Head of caudate nucleus (tissue), 42 donors: ENCODE measurements at regions of chr1 and their contacts with region 1.

Region 1: GRCh38 chr1:151606395-151606794 is 5.5 kb upstream of the SNX27 start:
- DNase-seq: peak in 27 of 42 donors; percentile 7 to 83 (median 51)

Region 2: GRCh38 chr1:151465026-151465425 is 141.4 kb before region 1 on chr1:
- intact Hi-C with region 1: no loop called
- DNase-seq: no peak

Region 3: DNA sequence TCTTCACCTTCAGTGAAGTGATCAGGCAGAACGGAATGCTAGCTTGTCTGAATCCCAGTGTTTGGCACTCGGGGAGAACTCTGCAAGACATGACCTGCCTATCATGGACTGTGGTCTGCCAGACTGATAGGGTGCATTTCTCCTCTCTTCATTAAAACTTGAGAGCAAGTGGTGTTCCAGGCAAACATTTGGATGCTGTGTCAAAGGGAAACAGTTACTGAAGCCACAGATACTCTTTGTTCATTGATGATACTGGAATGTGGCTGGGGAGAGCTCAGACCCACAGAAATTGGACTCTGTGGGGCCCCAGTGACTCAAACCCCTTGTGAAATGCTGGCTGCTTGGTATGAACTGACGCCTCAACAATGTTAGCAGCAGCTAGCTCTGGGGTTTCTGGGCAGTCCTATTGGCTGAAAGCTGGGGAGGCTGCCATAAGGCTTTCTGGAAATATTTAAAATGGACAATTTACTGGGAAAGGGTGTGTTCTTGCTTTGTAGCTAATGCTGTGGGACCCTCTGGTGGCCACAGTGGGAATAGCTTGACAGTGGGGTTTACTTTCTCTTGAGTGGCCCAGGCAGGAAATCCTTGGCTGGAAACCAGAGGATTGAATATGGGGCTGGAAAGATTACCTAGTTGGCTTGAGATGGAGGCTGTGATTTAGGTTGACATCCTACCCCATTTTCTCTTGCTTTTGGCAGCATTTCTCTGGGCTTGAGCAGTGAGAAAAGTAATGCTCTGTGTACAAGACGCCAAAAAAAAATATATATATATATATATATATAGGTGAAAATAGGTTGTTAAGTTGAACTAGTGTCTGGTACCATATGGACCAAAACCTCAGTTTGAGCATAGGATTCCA is 395.2 kb after region 1 on chr1:
- intact Hi-C with region 1: loop called (anchors 10 kb)
- DNase-seq: peak; percentile 46 to 93 (median 83)